ENCODE measurements at regions of chr1 and their contacts with region 1.

Region 1: DNA sequence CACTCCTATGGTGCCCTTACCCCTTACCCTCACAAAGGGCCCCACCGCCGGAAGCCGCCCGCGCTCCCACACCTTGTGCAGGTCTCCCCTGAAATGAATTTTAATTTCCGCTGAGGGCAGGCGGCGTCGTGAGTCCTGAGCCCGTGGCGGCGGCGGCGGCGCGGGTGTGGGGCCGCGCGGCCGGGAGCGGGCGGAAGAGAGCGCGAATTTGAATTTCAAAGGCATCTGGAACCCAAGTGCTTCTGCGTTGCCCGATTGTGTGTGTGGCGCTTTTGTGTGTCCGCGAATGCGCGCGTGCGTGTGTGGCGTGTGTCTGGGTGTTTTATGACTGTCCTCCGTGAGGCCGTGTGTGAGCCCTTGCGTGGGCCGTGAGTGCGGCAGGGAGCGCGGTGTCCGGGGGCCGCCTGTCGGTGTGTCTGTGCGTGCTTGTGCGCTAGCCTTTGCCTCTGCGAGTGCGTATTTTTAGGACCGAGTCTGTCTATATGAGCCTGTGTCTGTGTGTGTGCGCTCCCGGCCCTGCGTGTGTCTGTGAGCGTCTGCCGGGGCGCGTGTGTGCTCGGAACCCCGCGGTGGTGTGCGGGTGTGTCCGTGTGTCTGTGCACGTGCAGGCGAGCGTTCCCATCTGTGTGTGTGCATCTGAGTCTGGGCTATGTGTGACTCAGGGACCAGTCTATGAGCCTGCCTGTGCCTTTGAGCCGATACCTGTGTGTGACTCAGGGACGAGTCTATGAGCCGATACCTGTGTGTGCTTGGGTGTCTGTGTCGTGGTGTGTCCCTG is 7.9 kb upstream of the ADGRB2 start:
- DNase-seq: no peak
- H3K4me3 ChIP-seq: peak overlapping the region; percentile 17 to 61 (median 28)
- H3K27ac ChIP-seq: no peak overlapping the region
- H3K4me1 ChIP-seq: peaks cover 15 to 45% (median 31%) of the 10 kb centered on the region in 6 donors
- H3K27me3 ChIP-seq: peaks cover 0 to 63% (median 35%) of the 10 kb centered on the region in 7 donors
- CTCF ChIP-seq: no peak
- POLR2A ChIP-seq: no peak

Region 2: GRCh38 chr1:31723828-31724359 is 48.2 kb before region 1 on chr1:
- intact Hi-C with region 1: loop called (anchors 10 kb)
- DNase-seq: no peak
- H3K4me3 ChIP-seq: no peak overlapping the region
- H3K27ac ChIP-seq: no peak overlapping the region
- H3K4me1 ChIP-seq: no peaks in the 10 kb centered on the region
- H3K27me3 ChIP-seq: peaks cover 0 to 26% (median 0%) of the 10 kb centered on the region in 7 donors
- CTCF ChIP-seq: no peak
- POLR2A ChIP-seq: no peak

Measured in spleen (tissue), 13 donors.